ENCODE measurements at regions of chr11 and their contacts with region 1.

Region 1: GRCh38 chr11:111137846-111138245 is 107.7 kb upstream of the POU2AF2 start:
- DNase-seq: no peak
- ATAC-seq: no peak
- H3K4me3 ChIP-seq: no peak overlapping the region
- H3K27ac ChIP-seq: no peak overlapping the region
- H3K4me1 ChIP-seq: no peaks in the 10 kb centered on the region
- H3K27me3 ChIP-seq: no peaks in the 10 kb centered on the region
- CTCF ChIP-seq: no peak
- POLR2A ChIP-seq: no peak
- RAD21 ChIP-seq: no peak

Region 2: DNA sequence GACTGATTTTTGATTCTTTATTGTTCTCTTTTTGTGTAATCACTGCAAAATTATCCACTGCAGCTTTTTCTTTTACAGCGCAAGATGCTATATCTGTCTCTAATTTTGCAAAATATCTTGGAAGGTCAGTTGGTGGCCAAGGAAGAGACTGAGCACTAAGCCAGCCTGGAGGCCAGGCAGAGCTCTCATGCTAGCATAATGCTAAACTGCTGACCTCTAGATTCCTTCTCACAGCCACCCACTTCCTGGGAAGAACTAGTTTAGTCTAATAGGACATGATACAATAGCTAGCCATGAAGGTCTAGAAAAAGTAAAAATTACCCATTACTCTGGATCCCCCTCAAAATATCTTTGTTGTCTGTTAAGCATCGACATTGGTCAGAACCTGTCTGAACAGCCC is 198.4 kb before region 1 on chr11:
- CTCF ChIA-PET with region 1: interaction called, 10 read pairs
- POLR2A ChIA-PET with region 1: no interaction called
- dilution Hi-C with region 1: no loop called
- in situ Hi-C with region 1: no loop called
- intact Hi-C with region 1: no loop called
- DNase-seq: no peak
- ATAC-seq: no peak
- H3K4me3 ChIP-seq: no peak overlapping the region
- H3K27ac ChIP-seq: no peak overlapping the region
- H3K4me1 ChIP-seq: no peaks in the 10 kb centered on the region
- H3K27me3 ChIP-seq: no peaks in the 10 kb centered on the region; the same call in 1 of the 2 replicates
- CTCF ChIP-seq: no peak
- POLR2A ChIP-seq: no peak
- RAD21 ChIP-seq: no peak

Measured in IMR-90 (cell line).